AG04450 (cell line): ENCODE measurements at regions of chr11 and their contacts with region 1.

Region 1: GRCh38 chr11:67317205-67317887 is 14.0 kb downstream of the SSH3 start:
- DNase-seq: peak; percentile 82
- H3K4me3 ChIP-seq: peak overlapping the region; percentile 93
- H3K27ac ChIP-seq: peak overlapping the region; percentile 82
- H3K27me3 ChIP-seq: no peaks in the 10 kb centered on the region
- CTCF ChIP-seq: peak; percentile 95

Region 2: GRCh38 chr11:66835768-66836405 is 481.5 kb before region 1 on chr11:
- CTCF ChIA-PET with region 1: no interaction called
- POLR2A ChIA-PET with region 1: interaction called, 11 read pairs
- DNase-seq: no peak
- H3K4me3 ChIP-seq: no peak overlapping the region
- H3K27ac ChIP-seq: no peak overlapping the region
- H3K27me3 ChIP-seq: no peaks in the 10 kb centered on the region
- CTCF ChIP-seq: no peak

Region 3: GRCh38 chr11:67265633-67266423 is 51.5 kb before region 1 on chr11:
- CTCF ChIA-PET with region 1: interaction called, 71 read pairs
- POLR2A ChIA-PET with region 1: interaction called, 18 read pairs
- DNase-seq: no peak
- H3K4me3 ChIP-seq: peak overlapping the region; percentile 54
- H3K27ac ChIP-seq: no peak overlapping the region
- H3K27me3 ChIP-seq: no peaks in the 10 kb centered on the region
- CTCF ChIP-seq: peak; percentile 62

Region 4: DNA sequence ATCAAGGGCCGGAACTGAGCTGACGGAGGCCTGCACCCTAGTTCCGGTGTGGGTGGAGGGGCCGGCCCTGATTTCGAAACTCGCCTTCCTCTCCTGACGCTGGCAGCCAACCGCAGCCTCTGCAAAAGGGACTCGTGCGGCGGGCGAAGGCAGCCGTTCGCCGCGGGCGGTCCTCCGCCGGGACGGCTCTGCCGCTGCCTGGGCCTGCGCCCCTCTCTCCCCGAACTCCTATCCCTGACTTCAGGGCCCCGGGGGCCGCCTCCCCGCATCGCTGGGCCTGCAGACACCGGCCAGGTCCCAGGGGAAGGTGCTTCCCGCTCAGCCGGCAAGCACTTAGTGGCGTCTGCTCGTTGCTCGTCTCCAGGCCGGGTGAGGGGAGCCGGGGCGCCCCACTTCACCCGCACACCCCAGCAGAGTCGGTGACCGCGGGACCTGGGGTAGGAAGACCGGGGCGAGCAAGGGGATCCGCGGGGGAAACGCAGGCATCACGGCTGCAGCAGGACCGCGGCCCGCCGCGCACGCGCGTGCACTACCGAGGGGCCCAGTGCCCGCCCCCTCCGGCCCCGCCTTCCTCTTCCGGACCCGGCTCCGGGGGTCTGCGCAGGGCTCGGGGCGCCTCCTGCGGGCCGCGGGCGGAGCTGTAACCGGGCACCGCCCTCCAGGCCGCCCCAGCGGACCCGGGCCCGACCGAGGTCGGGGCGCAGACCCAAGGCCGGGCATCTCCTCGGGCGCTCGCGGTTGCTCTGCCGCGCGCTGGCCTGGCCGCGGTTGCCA is 28.7 kb before region 1 on chr11:
- CTCF ChIA-PET with region 1: interaction called, 4 read pairs
- POLR2A ChIA-PET with region 1: interaction called, 12 read pairs
- DNase-seq: peak; percentile 66
- H3K4me3 ChIP-seq: peak overlapping the region; percentile 76
- H3K27ac ChIP-seq: peak overlapping the region; percentile 97
- H3K27me3 ChIP-seq: no peaks in the 10 kb centered on the region
- CTCF ChIP-seq: 0 out of 2 replicates have a peak, but pooled peaks have one; percentile 28

Region 5: GRCh38 chr11:67382276-67383136 is 65.2 kb after region 1 on chr11:
- CTCF ChIA-PET with region 1: interaction called, 12 read pairs
- POLR2A ChIA-PET with region 1: no interaction called
- DNase-seq: no peak
- H3K4me3 ChIP-seq: no peak overlapping the region
- H3K27ac ChIP-seq: no peak overlapping the region
- H3K27me3 ChIP-seq: no peaks in the 10 kb centered on the region
- CTCF ChIP-seq: peak; percentile 99

Region 6: DNA sequence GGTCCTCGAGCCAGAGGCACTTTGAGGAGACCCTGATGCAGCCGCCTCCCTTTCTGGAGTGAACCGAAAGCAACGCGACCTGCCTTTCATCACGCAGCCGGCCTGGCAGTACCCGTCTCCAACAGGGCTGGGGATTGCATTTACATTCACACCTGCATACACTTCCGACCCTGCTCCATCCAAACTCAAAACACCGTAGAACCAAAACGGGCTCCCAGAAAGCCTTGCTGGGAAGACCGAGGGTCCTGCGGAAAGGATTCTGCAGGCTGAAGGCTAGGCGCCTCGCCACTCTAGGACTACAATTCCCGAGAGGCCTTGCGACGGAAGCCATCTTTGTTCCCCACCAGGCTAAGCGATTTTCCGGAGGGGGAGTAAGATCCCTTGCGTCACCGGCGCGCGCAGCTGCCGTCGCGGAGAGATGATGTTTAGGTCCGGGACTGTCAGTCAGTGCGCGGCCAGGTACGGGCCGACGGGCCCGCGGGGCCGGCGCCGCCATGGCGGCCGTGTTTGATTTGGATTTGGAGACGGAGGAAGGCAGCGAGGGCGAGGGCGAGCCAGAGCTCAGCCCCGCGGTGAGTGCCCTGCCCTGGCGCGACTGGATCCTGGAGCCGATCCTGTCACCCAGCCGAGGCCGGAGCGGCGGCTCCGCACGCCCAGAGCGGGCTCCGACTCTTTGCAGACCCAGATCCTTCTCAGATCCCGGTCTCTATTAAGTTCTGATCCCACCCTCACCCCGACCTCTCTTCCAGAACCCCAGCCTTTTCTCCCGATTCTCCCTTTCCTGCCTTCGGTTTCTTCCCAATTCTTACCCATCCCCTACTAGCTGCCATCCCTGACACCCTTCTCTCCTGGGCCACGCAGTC is 110.9 kb after region 1 on chr11 and contains the start of gene RPS6KB2:
- CTCF ChIA-PET with region 1: no interaction called
- POLR2A ChIA-PET with region 1: no interaction called
- DNase-seq: peak; percentile 89
- H3K4me3 ChIP-seq: peak within 1 kb of the TSS; percentile 96
- H3K27ac ChIP-seq: peak within 1 kb of the TSS; percentile 39
- H3K27me3 ChIP-seq: no peaks in the 10 kb centered on the region
- CTCF ChIP-seq: no peak
- polyA plus RNA-seq, gene RPS6KB2: 36.0 and 37.7 TPM in 2 replicates